ENCODE measurements at regions of chr6 and their contacts with region 1.

Region 1: GRCh38 chr6:133184798-133185372 is 56.3 kb upstream of the EYA4 start:
- DNase-seq: peak; percentile 3
- H3K4me3 ChIP-seq: no peak overlapping the region
- CTCF ChIP-seq: peak; percentile 22

Region 2: DNA sequence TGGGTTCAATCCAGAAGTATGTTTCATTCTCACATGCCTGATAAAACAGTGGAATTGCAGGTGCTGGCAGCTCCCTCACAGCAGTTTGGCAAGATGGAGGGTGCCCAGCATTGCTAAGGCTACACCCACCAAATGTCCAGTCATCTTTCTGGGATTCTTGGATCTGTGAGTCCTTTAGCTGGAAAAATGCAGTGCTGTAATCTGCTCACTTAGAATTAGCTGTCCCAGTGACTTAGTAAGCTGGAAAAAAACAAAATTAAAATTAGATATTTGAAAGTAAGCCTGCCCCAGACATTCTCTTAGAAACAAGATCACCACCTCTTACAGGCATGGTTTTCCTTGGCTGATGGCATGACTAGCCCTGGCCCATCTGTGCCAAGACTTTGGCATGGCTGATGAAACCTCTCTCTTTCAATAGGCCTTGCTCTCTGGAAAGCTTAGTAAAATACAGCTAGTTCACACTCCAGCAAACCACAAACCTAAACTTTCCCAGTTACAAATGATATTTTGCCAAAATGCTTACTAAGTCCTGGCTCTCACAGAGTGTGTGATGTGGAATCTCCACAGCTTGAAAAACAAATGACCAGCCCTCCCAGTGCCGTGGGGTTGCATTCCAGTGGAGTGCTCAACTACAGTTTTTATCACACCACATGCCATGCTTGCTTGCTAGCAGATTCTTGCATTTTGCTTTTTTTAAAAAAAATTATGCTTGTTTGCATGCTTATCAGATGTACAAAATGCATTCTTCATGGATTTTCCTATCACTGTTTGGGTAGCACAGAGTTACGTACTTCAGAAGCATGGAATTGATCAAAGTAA is 317.8 kb after region 1 on chr6:
- CTCF ChIA-PET with region 1: interaction called, 13 read pairs
- POLR2A ChIA-PET with region 1: no interaction called
- DNase-seq: peak; percentile 90
- H3K4me3 ChIP-seq: no peak overlapping the region
- CTCF ChIP-seq: no peak

Measured in AG04449 (cell line).